Left lung (tissue), 14 donors: ENCODE measurements at regions of chr2 and their contacts with region 1.

Region 1: GRCh38 chr2:165015052-165015642 is 59.8 kb upstream of the SLC38A11 start:
- DNase-seq: peak; percentile 28 to 77 (median 59)
- ATAC-seq: peak; percentile 91
- H3K4me3 ChIP-seq: no peak overlapping the region
- H3K27ac ChIP-seq: no peak overlapping the region
- H3K4me1 ChIP-seq: peaks cover 0 to 4% of the 10 kb centered on the region in 2 donors
- H3K27me3 ChIP-seq: peaks cover 0 to 8% of the 10 kb centered on the region in 2 donors
- CTCF ChIP-seq: peak; percentile 65 to 89

Region 2: DNA sequence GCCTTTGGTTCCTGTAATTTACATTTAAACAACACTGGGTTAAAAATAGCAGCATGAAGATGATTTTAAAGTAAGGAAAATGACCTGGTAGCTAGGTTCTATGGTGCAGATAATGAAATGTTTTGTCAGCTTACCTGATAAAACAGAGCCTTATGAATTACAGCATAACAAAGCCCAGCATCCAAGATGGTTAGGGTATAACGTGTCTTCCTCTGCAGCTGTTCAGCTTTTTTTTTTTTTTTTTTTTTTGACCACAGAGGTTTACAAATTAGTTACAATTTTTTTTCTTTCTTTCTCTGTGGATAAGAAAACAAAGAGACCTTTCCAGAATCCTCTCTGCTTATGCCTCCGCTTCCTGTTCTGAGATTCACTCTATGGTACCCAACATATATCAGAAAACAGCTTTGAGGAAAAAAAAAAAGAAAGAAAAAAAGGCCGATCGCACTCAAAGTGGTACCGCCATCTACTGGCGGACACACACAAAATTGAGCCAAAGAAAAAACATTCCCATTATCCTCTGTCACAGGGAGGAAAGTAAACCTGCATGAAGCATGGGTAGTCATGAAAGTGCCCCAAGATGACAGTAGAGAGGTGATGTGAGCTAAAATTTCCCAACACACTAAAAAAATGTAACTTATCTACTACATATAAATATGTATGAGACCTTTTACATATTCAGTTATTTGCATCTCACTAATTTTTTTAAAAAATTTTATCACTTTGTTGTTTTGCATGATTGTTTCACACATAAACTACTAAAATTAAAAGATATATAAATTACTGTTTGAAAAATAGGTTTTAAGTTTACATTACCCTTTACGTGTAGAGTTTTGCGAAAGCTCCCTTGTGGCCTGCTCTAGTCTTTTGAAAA is 188.8 kb after region 1 on chr2 and contains the start of gene SCN3A:
- intact Hi-C with region 1: loop called in 1 of 2 experiments (anchors 10 kb)
- DNase-seq: peak in 2 of 4 donors; percentile 23 to 40
- ATAC-seq: peak; percentile 67
- H3K4me3 ChIP-seq: no peak within 1 kb of the TSS
- H3K27ac ChIP-seq: no peak within 1 kb of the TSS
- H3K4me1 ChIP-seq: peaks cover 0 to 5% of the 10 kb centered on the region in 2 donors
- H3K27me3 ChIP-seq: no peaks in the 10 kb centered on the region
- CTCF ChIP-seq: peak in 1 of 2 donors; percentile 59
- polyA plus RNA-seq, gene SCN3A: 0.80 to 1.6 (median 0.95) TPM

Region 3: DNA sequence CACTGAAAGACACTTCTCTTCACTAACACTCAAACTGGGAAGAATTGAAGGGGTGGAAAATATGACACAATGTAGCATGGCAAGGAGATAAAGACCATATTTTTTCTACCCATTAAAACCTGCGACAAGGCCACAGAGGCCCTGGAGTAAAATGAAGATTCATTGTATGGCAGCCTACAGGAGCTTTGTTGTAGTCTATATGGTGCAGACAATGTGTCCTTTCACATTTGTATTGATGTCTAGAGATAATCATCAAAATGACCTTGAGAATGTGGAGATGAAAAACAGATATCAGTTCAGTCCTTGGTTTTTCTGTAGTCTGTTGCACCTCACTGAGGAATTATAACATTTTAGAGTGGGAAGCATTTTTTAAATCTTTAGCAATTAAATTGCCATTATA is 534.5 kb after region 1 on chr2:
- intact Hi-C with region 1: no loop called
- DNase-seq: no peak
- ATAC-seq: no peak
- H3K4me3 ChIP-seq: no peak overlapping the region
- H3K27ac ChIP-seq: no peak overlapping the region
- H3K4me1 ChIP-seq: no peaks in the 10 kb centered on the region
- H3K27me3 ChIP-seq: no peaks in the 10 kb centered on the region
- CTCF ChIP-seq: no peak